ENCODE measurements at regions of chr5 and their contacts with region 1.

Region 1: GRCh38 chr5:6820851-6821479 is 107.7 kb downstream of the TENT4A start:
- DNase-seq: peak; percentile 39
- H3K4me3 Mint-ChIP-seq: no peak overlapping the region
- H3K27ac Mint-ChIP-seq: no peak overlapping the region
- H3K4me1 Mint-ChIP-seq: no peaks in the 10 kb centered on the region
- H3K27me3 Mint-ChIP-seq: peaks cover 12% of the 10 kb centered on the region

Region 2: DNA sequence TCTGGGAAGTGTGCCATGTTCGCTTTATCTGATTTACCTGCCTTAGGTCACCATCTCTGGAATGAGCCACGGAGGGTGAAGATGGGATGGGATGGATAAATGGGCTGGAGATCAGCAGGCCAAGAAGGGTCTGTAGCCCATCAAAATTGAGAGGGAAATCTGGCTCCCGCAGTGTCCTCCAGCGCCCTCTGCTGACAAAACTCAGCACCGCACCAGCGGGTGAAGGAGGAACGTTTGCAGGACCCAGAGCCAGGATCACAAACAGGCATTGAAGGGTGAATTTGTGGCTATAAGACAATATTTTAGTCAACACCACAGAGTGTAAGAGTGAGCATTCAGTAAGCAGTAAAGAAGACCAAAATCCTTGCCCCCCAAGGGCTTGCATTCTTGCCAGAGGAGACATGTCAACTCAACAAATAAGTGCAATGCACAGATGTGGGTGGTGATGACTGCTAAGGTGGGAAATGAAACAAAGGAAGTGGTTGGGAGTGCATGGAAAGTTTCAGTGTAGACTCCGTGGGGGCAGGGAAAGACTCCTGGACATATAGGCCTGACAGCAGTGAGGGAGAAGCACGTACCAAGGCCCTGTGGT is 16.6 kb after region 1 on chr5:
- intact Hi-C with region 1: loop called (anchors 1 kb)
- DNase-seq: no peak
- H3K4me3 Mint-ChIP-seq: no peak overlapping the region
- H3K27ac Mint-ChIP-seq: no peak overlapping the region
- H3K4me1 Mint-ChIP-seq: peaks cover 13% of the 10 kb centered on the region
- H3K27me3 Mint-ChIP-seq: peaks cover 9% of the 10 kb centered on the region

Region 3: DNA sequence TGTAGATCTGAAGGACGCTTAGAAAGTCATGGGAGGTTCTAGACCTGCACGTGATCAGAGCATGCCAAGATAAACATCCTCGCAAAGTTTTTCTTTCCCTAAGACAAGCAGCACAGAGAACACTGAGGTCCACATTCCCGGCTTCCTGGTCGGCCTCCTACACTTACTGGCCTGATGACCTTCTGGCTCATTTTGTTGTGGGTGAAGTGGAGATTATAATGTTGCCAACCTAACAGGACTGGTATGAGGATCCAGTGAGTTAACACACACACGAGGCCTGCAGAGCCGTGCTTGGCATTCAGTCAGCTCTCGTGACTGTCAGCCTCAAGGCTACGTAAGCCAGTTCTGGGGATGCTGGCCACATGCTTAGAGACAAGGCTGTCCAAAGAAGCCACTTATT is 78.3 kb after region 1 on chr5:
- intact Hi-C with region 1: no loop called
- DNase-seq: no peak
- H3K4me3 Mint-ChIP-seq: no peak overlapping the region
- H3K27ac Mint-ChIP-seq: no peak overlapping the region
- H3K4me1 Mint-ChIP-seq: no peaks in the 10 kb centered on the region
- H3K27me3 Mint-ChIP-seq: no peaks in the 10 kb centered on the region

Region 4: GRCh38 chr5:6926491-6927038 is 105.6 kb after region 1 on chr5:
- intact Hi-C with region 1: loop called (anchors 5 kb)
- DNase-seq: no peak
- H3K4me3 Mint-ChIP-seq: no peak overlapping the region
- H3K27ac Mint-ChIP-seq: no peak overlapping the region
- H3K4me1 Mint-ChIP-seq: no peaks in the 10 kb centered on the region
- H3K27me3 Mint-ChIP-seq: peaks cover 2% of the 10 kb centered on the region

Region 5: GRCh38 chr5:7396710-7397454 is 575.9 kb after region 1 on chr5:
- intact Hi-C with region 1: loop called (anchors 5 kb)
- DNase-seq: no peak
- H3K4me3 Mint-ChIP-seq: no peak overlapping the region
- H3K27ac Mint-ChIP-seq: no peak overlapping the region
- H3K4me1 Mint-ChIP-seq: no peaks in the 10 kb centered on the region
- H3K27me3 Mint-ChIP-seq: peaks cover 33% of the 10 kb centered on the region

Region 6: DNA sequence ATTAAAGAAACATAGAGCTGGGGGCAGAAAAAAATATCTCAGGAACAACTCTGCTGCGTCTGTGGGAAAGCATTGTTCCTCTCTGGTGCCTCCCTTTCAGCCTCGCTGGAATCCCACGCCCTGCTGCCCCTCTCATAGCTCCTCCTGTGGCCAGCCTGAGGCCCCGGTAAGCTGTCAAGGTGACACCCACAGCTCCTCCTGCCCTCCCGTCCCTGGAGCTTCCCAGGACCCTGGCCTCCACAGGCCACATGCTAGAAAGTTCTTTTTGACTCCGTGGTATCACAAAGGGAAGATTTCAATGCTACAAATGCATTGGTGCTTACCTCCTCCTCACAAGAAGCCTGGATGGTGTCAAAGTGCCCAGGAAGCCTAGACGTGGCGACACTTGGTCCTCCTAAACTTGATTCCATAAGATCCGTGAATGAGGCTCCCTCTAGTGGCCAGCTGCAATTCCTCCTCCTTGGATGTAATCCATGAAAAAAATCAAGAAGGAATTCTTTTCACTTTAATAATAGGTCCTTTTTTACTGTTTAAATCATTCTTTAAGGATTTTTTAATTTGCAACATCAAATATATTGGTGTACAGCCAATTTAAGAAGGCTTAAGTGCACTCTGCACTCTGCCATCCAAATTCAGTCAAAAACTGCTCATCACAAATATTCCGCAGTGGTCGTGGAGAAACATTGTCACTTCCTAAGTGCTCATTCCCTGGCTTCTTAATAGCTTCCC is 925.1 kb after region 1 on chr5:
- intact Hi-C with region 1: loop called (anchors 2 kb)
- DNase-seq: peak; percentile 4
- H3K4me3 Mint-ChIP-seq: no peak overlapping the region
- H3K27ac Mint-ChIP-seq: no peak overlapping the region
- H3K4me1 Mint-ChIP-seq: no peaks in the 10 kb centered on the region
- H3K27me3 Mint-ChIP-seq: no peaks in the 10 kb centered on the region

Region 7: GRCh38 chr5:7815892-7816534 is 995.0 kb after region 1 on chr5:
- intact Hi-C with region 1: loop called (anchors 1 kb)
- DNase-seq: peak; percentile 47
- H3K4me3 Mint-ChIP-seq: no peak overlapping the region
- H3K27ac Mint-ChIP-seq: no peak overlapping the region
- H3K4me1 Mint-ChIP-seq: peaks cover 7% of the 10 kb centered on the region
- H3K27me3 Mint-ChIP-seq: peaks cover 12% of the 10 kb centered on the region